Right cardiac atrium (tissue), 5 donors: ENCODE measurements at regions of chr1 and their contacts with region 1.

Region 1: GRCh38 chr1:33460947-33461629 is 11.4 kb upstream of the ZSCAN20 start:
- DNase-seq: peak in 2 of 3 donors; percentile 73 to 75
- ATAC-seq: peak; percentile 52 to 53
- H3K4me3 ChIP-seq: no peak overlapping the region
- H3K27ac ChIP-seq: peak overlapping the region; percentile 90
- H3K4me1 ChIP-seq: peaks cover 5% of the 10 kb centered on the region
- H3K27me3 ChIP-seq: no peaks in the 10 kb centered on the region

Region 2: DNA sequence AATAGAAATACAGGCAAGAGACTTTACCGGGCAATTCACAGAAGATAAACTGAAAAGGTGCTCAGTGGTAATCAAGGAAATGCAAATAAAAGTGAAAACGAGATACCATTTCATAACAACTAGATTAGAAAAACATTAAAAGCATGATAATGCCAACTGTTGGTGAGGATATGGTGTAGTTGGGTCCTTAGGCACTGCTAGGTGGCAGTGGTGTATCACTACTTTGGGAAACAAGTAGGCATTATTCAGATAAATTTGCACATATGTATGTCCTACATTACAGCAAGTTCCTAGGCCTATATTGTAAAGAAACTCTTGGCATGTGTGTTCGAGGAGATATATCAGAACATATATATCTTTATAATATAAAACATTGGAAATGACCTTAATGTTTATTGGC is 349.1 kb before region 1 on chr1:
- intact Hi-C with region 1: loop called in 1 of 4 experiments (anchors 10 kb)
- DNase-seq: no peak
- ATAC-seq: no peak
- H3K4me3 ChIP-seq: no peak overlapping the region
- H3K27ac ChIP-seq: no peak overlapping the region
- H3K4me1 ChIP-seq: no peaks in the 10 kb centered on the region
- H3K27me3 ChIP-seq: no peaks in the 10 kb centered on the region

Region 3: GRCh38 chr1:33295450-33296081 is 165.5 kb before region 1 on chr1:
- intact Hi-C with region 1: loop called in 3 of 4 experiments (anchors 5 to 10 kb)
- DNase-seq: peak; percentile 82 to 93 (median 93)
- ATAC-seq: peak; percentile 78 to 81
- H3K4me3 ChIP-seq: no peak overlapping the region
- H3K27ac ChIP-seq: no peak overlapping the region
- H3K4me1 ChIP-seq: peaks cover 3% of the 10 kb centered on the region
- H3K27me3 ChIP-seq: no peaks in the 10 kb centered on the region

Region 4: GRCh38 chr1:33349778-33350610 is 111.1 kb before region 1 on chr1:
- intact Hi-C with region 1: no loop called
- DNase-seq: peak; percentile 93 to 97 (median 96)
- ATAC-seq: peak; percentile 87 to 93
- H3K4me3 ChIP-seq: peak overlapping the region; percentile 96
- H3K27ac ChIP-seq: peak overlapping the region; percentile 92
- H3K4me1 ChIP-seq: peaks cover 14% of the 10 kb centered on the region
- H3K27me3 ChIP-seq: no peaks in the 10 kb centered on the region

Region 5: DNA sequence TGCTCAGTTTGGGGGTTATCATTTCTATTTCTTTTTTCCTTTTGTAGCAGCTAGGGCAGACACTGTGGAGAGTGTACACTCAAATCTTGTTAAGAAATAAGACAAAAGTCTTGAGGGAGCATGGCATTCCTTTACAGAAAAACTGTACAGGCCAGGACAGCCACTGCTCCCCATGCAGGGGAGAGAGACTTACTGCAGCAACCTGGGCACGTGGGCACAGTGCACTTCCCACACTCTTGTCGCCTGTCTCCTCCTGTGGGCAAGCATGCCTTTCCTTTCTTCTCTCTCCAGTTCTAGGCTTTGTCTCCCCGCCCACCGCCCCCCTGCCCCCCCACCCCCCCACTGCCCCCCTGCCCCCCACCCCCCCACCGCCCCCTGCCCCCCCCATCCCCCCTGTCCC is 82.1 kb before region 1 on chr1:
- intact Hi-C with region 1: loop called in 3 of 4 experiments (anchors 5 to 10 kb)
- DNase-seq: peak in 1 of 3 donors; percentile 46
- ATAC-seq: no peak
- H3K4me3 ChIP-seq: no peak overlapping the region
- H3K27ac ChIP-seq: no peak overlapping the region
- H3K4me1 ChIP-seq: peaks cover 20% of the 10 kb centered on the region
- H3K27me3 ChIP-seq: no peaks in the 10 kb centered on the region

Region 6: DNA sequence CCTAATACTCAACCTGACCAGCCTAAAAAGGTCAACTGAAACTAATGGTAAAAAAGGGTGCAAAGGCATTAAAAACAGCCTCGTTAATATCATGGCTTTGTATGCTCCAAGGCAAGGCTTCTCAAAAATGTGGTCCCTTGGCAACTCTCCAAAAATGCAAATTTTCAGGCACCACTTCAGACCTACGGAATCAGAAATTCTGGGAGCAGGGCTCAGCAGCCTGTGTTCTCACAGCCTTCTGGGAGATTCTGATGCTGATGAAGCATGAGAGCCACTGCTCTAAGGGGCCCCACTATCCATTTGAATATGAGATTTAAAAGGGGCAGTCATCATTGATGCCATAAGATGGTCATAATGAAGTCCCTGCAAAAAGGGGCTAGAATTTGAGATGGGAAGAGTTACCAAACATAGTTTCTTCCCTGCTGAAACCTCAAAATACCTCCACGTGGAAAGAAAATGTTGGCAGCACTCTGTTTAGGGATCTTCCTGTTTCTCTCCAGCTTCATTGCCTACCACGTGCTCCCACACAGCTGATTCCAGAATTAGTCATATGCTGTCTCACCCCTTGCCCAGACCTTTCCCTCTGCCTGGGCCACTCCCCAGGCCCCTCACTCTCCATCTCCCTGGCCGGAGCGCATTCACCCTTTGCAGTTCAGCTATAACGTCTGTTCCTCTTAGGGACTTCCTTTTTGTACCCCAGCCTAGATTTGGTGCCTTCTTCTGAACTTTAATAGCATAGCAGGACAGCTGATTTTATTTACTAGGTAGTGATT is 76.9 kb before region 1 on chr1:
- intact Hi-C with region 1: loop called in 2 of 4 experiments (anchors 10 kb)
- DNase-seq: no peak
- ATAC-seq: peak; percentile 38 to 40
- H3K4me3 ChIP-seq: no peak overlapping the region
- H3K27ac ChIP-seq: peak overlapping the region; percentile 38
- H3K4me1 ChIP-seq: peaks cover 16% of the 10 kb centered on the region
- H3K27me3 ChIP-seq: no peaks in the 10 kb centered on the region